ENCODE measurements at regions of chr4 and their contacts with region 1.

Region 1: DNA sequence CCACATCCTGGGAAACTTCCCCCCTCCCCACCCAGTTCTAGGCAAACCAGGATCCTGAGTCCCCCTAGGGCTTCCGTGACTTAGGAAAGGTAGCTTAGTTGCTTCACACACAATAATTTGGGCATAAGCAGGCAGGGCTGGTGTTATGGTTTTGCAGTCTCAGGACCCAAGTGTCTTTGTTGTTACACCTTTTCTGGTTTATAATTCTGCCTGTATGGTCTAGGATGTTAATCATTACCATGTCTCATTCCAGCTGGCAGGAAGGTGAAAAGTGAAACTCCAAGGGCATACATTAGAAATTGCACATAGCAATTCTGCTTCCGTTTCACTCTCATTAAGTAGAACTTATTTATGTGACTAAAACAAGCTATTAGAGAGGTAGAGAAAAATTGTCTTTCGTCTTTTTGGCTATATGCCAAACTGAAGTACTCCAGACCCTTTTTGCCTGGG is 16.9 kb downstream of the UGT8 start:
- DNase-seq: no peak
- H3K4me3 ChIP-seq: no peak overlapping the region
- H3K27ac ChIP-seq: no peak overlapping the region
- H3K4me1 ChIP-seq: peaks cover 13% of the 10 kb centered on the region
- CTCF ChIP-seq: no peak

Region 2: GRCh38 chr4:114603497-114603896 is 12.0 kb before region 1 on chr4:
- CTCF ChIA-PET with region 1: interaction called, 3 read pairs
- POLR2A ChIA-PET with region 1: interaction called, 10 read pairs
- intact Hi-C with region 1: no loop called
- DNase-seq: peak; percentile 85
- H3K4me3 ChIP-seq: peak overlapping the region; percentile 93
- H3K27ac ChIP-seq: peak overlapping the region; percentile 80
- H3K4me1 ChIP-seq: peaks cover 58% of the 10 kb centered on the region
- CTCF ChIP-seq: no peak

Region 3: GRCh38 chr4:114659386-114660008 is 44.0 kb after region 1 on chr4:
- CTCF ChIA-PET with region 1: no interaction called
- POLR2A ChIA-PET with region 1: no interaction called
- intact Hi-C with region 1: no loop called
- DNase-seq: peak; percentile 80
- H3K4me3 ChIP-seq: no peak overlapping the region
- H3K27ac ChIP-seq: no peak overlapping the region
- H3K4me1 ChIP-seq: no peaks in the 10 kb centered on the region
- CTCF ChIP-seq: peak; percentile 100

Region 4: GRCh38 chr4:114827651-114828050 is 212.2 kb after region 1 on chr4:
- CTCF ChIA-PET with region 1: no interaction called
- POLR2A ChIA-PET with region 1: no interaction called
- intact Hi-C with region 1: no loop called
- DNase-seq: no peak
- H3K4me3 ChIP-seq: no peak overlapping the region
- H3K27ac ChIP-seq: no peak overlapping the region
- H3K4me1 ChIP-seq: no peaks in the 10 kb centered on the region
- CTCF ChIP-seq: no peak